ENCODE measurements at regions of chr3 and their contacts with region 1.

Region 1: GRCh38 chr3:149120051-149120972 is 9.1 kb upstream of the HPS3 start:
- DNase-seq: peak; percentile 45
- ATAC-seq: peak; percentile 94
- H3K4me3 ChIP-seq: no peak overlapping the region
- H3K27ac ChIP-seq: no peak overlapping the region
- H3K4me1 ChIP-seq: no peaks in the 10 kb centered on the region
- H3K27me3 ChIP-seq: no peaks in the 10 kb centered on the region; a peak in 1 of 4 replicates
- CTCF ChIP-seq: peak; percentile 53 to 73 (median 55); a peak in 5 of 6 replicates
- EP300 ChIP-seq: no peak
- POLR2A ChIP-seq: no peak
- RAD21 ChIP-seq: peak; percentile 94

Region 2: GRCh38 chr3:149245738-149246451 is 125.6 kb after region 1 on chr3:
- CTCF ChIA-PET with region 1: interaction called, 6 read pairs
- POLR2A ChIA-PET with region 1: no interaction called
- RAD21 ChIA-PET with region 1: interaction called, 5 read pairs
- SMC1A ChIA-PET with region 1: interaction called, 11 read pairs
- in situ Hi-C with region 1: no loop called
- intact Hi-C with region 1: no loop called
- DNase-seq: peak; percentile 46
- ATAC-seq: peak; percentile 87
- H3K4me3 ChIP-seq: 0 out of 2 replicates have a peak overlapping the region, but pooled peaks have one; percentile 17
- H3K27ac ChIP-seq: no peak overlapping the region
- H3K4me1 ChIP-seq: peaks cover 35% of the 10 kb centered on the region
- H3K27me3 ChIP-seq: no peaks in the 10 kb centered on the region; a peak in 1 of 4 replicates
- CTCF ChIP-seq: no peak
- EP300 ChIP-seq: 0 out of 4 replicates have a peak, but pooled peaks of 1 of the 2 experiments have one; percentile 45
- POLR2A ChIP-seq: no peak
- RAD21 ChIP-seq: no peak

Region 3: DNA sequence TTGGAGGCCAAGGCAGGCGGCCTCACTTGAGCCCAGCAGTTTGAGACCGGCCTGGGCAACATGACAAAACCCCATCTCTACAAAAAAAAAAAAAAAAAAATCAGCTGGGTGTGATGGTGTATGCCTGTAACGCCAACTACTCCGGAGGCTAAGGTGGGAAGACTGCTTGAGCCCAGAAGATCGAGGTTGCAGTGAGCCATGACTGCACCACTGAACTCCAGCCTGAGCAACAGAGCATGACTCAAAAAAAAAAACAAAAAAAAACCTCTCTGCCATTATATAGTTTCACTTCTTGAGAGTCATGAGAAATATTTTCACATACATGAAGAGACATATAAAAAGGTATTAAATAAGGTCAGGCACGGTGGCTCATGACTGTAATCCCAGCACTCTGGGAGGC is 147.3 kb after region 1 on chr3:
- CTCF ChIA-PET with region 1: interaction called, 168 read pairs
- POLR2A ChIA-PET with region 1: no interaction called
- RAD21 ChIA-PET with region 1: interaction called, 36 read pairs
- SMC1A ChIA-PET with region 1: interaction called, 86 read pairs
- in situ Hi-C with region 1: loop called (anchors 5 kb)
- intact Hi-C with region 1: no loop called
- DNase-seq: no peak
- ATAC-seq: peak; percentile 78
- H3K4me3 ChIP-seq: no peak overlapping the region
- H3K27ac ChIP-seq: no peak overlapping the region
- H3K4me1 ChIP-seq: 0 out of 2 replicates have a peak, but pooled peaks cover 2% of the 10 kb centered on the region
- H3K27me3 ChIP-seq: no peaks in the 10 kb centered on the region
- CTCF ChIP-seq: no peak
- EP300 ChIP-seq: no peak
- POLR2A ChIP-seq: no peak
- RAD21 ChIP-seq: no peak

Region 4: DNA sequence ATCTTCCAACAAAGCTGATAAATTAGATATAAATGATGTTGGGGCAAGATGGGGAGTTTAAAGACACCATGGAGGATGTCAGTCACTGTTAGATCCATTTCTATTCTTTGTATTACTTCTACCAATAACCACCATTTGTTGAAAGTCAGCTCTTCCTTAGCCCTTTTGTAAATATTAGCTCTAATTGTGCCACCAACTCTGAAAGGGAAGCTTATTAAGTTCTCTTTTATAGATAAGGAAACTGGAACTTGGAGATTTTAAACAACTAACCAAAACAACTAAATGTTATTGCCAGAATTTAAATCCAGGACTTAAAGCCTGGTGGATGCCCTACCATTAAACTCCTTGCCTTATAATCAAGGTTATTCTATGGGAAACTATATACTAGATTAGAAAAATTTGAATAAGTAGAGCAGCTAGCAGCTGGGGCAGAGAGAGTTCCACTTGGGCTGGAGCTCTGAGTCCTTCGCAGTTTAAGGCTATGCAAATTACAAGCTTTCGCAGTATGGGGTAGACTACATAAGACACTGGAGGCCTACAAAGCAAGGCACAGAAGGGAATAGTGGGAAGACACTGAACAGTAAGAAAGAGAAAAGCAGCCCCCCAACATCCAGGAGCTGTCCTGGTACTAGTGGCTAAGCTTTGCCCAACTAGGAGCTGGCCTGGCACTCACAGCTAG is 160.5 kb after region 1 on chr3:
- CTCF ChIA-PET with region 1: interaction called, 168 read pairs
- POLR2A ChIA-PET with region 1: no interaction called
- RAD21 ChIA-PET with region 1: interaction called, 24 read pairs
- SMC1A ChIA-PET with region 1: interaction called, 86 read pairs
- in situ Hi-C with region 1: no loop called
- intact Hi-C with region 1: no loop called
- DNase-seq: no peak
- ATAC-seq: no peak
- H3K4me3 ChIP-seq: no peak overlapping the region
- H3K27ac ChIP-seq: no peak overlapping the region
- H3K4me1 ChIP-seq: peaks cover 4% of the 10 kb centered on the region; the same call in 1 of the 2 replicates
- H3K27me3 ChIP-seq: no peaks in the 10 kb centered on the region
- CTCF ChIP-seq: no peak
- EP300 ChIP-seq: no peak
- POLR2A ChIP-seq: no peak
- RAD21 ChIP-seq: no peak

Measured in GM12878 (cell line).